ENCODE measurements at regions of chr18 and their contacts with region 1.

Region 1: GRCh38 chr18:59697236-59697932 is at the start of gene CCBE1:
- DNase-seq: peak in 1 of 2 experiments; percentile 64
- H3K4me3 ChIP-seq: no peak within 1 kb of the TSS
- H3K27ac ChIP-seq: no peak within 1 kb of the TSS
- H3K4me1 ChIP-seq: no peaks in the 10 kb centered on the region
- H3K27me3 ChIP-seq: no peaks in the 10 kb centered on the region
- CTCF ChIP-seq: no peak
- total RNA-seq, gene CCBE1: 3.1 and 5.8 TPM in 2 replicates

Region 2: DNA sequence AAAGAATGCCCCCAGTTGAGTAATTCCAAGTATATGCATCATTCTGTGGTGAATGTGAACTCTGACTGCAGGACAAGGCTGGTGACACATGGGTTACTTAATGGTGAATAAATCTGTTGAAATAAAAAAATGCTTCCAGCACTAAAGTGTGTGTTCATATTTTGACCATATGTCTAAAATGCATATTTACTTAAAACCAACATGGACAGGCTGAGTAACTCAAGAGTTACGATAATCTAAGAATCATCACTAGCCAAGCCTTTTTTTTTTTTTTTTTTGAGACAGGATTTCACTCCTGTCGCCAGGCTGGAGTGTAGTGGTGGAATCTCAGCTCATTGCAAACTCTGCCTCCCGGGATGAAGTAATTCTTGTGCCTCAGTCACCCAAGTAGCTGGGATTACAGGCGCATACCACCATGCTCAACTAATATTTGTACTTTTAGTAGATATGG is 46.9 kb after region 1 on chr18:
- CTCF ChIA-PET with region 1: interaction called, 13 read pairs
- POLR2A ChIA-PET with region 1: no interaction called
- intact Hi-C with region 1: no loop called
- DNase-seq: peak in 1 of 2 experiments; percentile 95
- H3K4me3 ChIP-seq: no peak overlapping the region
- H3K27ac ChIP-seq: peak overlapping the region; percentile 65
- H3K4me1 ChIP-seq: peaks cover 36% of the 10 kb centered on the region
- H3K27me3 ChIP-seq: no peaks in the 10 kb centered on the region
- CTCF ChIP-seq: no peak

Region 3: DNA sequence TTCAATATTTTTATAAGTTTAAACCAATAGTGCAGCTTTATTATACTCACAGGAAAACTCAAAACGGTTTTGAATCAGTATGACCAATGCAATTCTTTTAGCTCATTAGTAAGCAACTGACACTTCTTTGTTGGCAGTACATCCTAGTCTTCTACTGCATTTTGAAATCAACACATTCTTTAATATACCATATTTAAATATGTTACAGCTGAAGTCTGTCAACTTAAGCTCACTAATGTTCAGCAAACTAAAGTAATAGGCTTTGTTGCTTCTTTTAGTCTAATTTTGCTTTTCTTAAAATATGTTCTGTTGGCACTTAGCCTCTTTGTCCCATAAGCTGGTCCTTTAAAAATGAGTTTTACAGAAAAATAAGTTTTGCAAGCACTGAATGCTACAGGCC is 55.3 kb after region 1 on chr18:
- CTCF ChIA-PET with region 1: interaction called, 11 read pairs
- POLR2A ChIA-PET with region 1: no interaction called
- intact Hi-C with region 1: no loop called
- DNase-seq: no peak
- H3K4me3 ChIP-seq: no peak overlapping the region
- H3K27ac ChIP-seq: no peak overlapping the region
- H3K4me1 ChIP-seq: peaks cover 14% of the 10 kb centered on the region
- H3K27me3 ChIP-seq: no peaks in the 10 kb centered on the region
- CTCF ChIP-seq: no peak

Region 4: DNA sequence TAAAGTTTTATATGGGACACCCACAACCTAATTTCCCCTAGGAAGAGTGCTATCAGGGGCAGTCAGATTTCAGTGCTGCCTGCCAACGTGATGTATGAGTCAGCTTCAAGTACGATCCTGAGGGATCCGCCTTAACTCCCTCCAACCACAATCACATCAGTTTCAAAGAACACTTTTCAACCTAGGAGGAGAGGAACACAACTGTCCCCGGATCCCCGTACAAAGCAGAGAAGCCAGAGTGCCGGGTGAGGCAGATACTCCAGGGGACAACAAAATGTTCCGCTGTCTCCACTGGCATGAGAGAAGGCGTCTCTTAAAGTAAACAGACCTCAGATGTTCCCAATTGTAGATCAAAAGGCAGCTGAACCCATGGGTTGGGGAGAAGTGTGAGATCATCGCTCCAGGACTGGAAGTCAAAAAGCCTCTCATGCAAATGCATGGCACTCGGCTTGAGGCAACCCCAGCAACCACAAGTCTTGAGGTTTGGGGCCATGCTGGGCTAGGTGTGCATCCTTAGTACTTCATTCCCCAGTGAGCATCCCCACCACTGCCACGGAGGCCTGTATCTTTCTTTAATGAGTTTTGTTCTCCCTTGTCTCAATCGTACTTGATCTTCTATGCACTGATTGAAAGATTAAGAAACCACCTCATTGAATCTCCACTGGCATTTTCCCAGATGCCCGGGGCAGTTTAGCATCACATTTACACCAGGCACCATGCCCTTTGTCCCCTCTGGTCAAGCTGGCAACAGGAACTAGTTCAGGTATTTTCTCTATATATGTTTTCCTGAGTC is 90.8 kb after region 1 on chr18:
- CTCF ChIA-PET with region 1: no interaction called
- POLR2A ChIA-PET with region 1: no interaction called
- intact Hi-C with region 1: no loop called
- DNase-seq: peak; percentile 59 to 69
- H3K4me3 ChIP-seq: peak overlapping the region; percentile 31
- H3K27ac ChIP-seq: peak overlapping the region; percentile 57
- H3K4me1 ChIP-seq: peaks cover 34% of the 10 kb centered on the region
- H3K27me3 ChIP-seq: no peaks in the 10 kb centered on the region
- CTCF ChIP-seq: no peak

Measured in PC-9 (cell line).